ENCODE measurements at regions of chr1 and their contacts with region 1.

Region 1: DNA sequence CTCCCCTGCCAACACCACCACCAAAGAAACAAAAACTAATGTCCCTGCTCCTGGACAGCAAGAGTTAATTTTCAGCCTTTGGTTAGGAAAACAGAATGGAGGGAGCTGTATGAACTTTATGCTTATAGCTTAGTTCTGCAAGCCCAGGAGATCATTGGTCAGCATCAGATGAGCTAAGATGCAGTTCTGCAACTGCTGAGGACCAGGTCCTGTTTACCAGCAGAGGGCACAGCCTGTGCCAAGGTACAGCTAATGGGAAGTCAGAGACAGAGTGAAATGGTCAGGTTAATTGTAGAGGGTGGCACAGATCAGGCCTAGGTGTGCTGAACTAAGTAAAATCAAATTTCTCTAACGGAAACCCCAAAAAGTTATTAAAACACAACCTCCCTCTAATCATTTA is 161.3 kb downstream of the ROR1 start:
- DNase-seq: no peak
- ATAC-seq: peak in 7 of 8 donors; percentile 54 to 86 (median 74)
- H3K4me3 ChIP-seq: no peak overlapping the region
- H3K27ac ChIP-seq: peak overlapping the region in 5 of 10 donors; percentile 10 to 75 (median 41)
- H3K4me1 ChIP-seq: peaks cover 0 to 44% (median 15%) of the 10 kb centered on the region in 9 donors
- H3K27me3 ChIP-seq: no peaks in the 10 kb centered on the region
- CTCF ChIP-seq: peak in 7 of 9 donors; percentile 8 to 53 (median 41)

Region 2: DNA sequence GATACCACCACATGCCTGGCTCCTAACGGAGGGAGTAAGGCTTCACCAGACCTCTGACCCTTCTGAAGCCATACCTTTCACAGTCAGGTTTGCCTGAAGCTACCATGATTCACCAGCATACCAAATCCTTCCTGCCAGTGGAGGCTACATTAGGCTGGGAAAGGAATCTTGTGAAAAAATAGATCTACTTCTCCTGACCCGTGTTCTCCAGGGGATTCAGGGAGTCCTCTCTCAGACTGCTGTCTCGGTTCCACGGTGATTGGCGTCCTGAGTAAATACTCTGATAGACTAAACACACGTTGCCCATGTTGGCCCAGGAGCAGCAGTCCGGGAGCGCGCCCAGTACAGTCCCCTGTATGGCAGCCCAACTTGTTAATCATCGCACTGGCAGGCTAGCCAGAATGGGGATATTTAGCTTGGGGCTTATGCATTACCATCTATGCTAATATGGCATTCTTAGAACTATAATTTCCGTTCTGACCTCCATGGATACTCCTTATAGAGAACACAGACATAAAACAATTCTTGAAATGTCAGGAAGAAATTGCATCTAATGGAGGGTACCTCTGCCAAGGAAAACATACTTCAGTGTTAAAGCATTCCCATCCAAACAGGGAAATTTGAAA is 11.8 kb after region 1 on chr1:
- intact Hi-C with region 1: loop called in 1 of 10 experiments (anchors 1 kb)
- DNase-seq: peak; percentile 43 to 47
- ATAC-seq: peak in 7 of 8 donors; percentile 65 to 90 (median 82)
- H3K4me3 ChIP-seq: no peak overlapping the region
- H3K27ac ChIP-seq: peak overlapping the region in 6 of 10 donors; percentile 1 to 65 (median 52)
- H3K4me1 ChIP-seq: peaks cover 6 to 82% (median 38%) of the 10 kb centered on the region in 9 donors
- H3K27me3 ChIP-seq: no peaks in the 10 kb centered on the region
- CTCF ChIP-seq: no peak

Region 3: GRCh38 chr1:64121766-64122385 is 186.7 kb after region 1 on chr1:
- intact Hi-C with region 1: loop called in 1 of 10 experiments (anchors 10 kb)
- DNase-seq: no peak
- ATAC-seq: no peak
- H3K4me3 ChIP-seq: no peak overlapping the region
- H3K27ac ChIP-seq: no peak overlapping the region
- H3K4me1 ChIP-seq: peaks cover 0 to 19% (median 0%) of the 10 kb centered on the region in 9 donors
- H3K27me3 ChIP-seq: no peaks in the 10 kb centered on the region
- CTCF ChIP-seq: no peak

Region 4: GRCh38 chr1:64584479-64584878 is 649.3 kb after region 1 on chr1:
- intact Hi-C with region 1: no loop called
- DNase-seq: no peak
- ATAC-seq: no peak
- H3K4me3 ChIP-seq: no peak overlapping the region
- H3K27ac ChIP-seq: no peak overlapping the region
- H3K4me1 ChIP-seq: peaks cover 0 to 12% (median 0%) of the 10 kb centered on the region in 9 donors
- H3K27me3 ChIP-seq: no peaks in the 10 kb centered on the region
- CTCF ChIP-seq: peak in 1 of 9 donors; percentile 30

Measured in heart right ventricle (tissue), 16 donors.